Esophagus muscularis mucosa (tissue), 4 donors: ENCODE measurements at regions of chr14 and their contacts with region 1.

Region 1: GRCh38 chr14:75088574-75089373 is 19.3 kb downstream of the ZC2HC1C start:
- DNase-seq: no peak
- H3K4me3 ChIP-seq: no peak overlapping the region
- H3K27ac ChIP-seq: no peak overlapping the region
- H3K4me1 ChIP-seq: peaks cover 0 to 5% (median 2%) of the 10 kb centered on the region in 4 donors
- H3K27me3 ChIP-seq: no peaks in the 10 kb centered on the region
- CTCF ChIP-seq: peak; percentile 70 to 81 (median 77)
- EP300 ChIP-seq: no peak
- POLR2A ChIP-seq: no peak

Region 2: GRCh38 chr14:74913986-74914573 is 174.7 kb before region 1 on chr14:
- intact Hi-C with region 1: loop called (anchors 10 kb)
- DNase-seq: no peak
- H3K4me3 ChIP-seq: no peak overlapping the region
- H3K27ac ChIP-seq: peak overlapping the region; percentile 24 to 66 (median 42)
- H3K4me1 ChIP-seq: peaks cover 31 to 49% (median 39%) of the 10 kb centered on the region in 4 donors
- H3K27me3 ChIP-seq: no peaks in the 10 kb centered on the region
- CTCF ChIP-seq: peak; percentile 53 to 70 (median 60)
- EP300 ChIP-seq: no peak
- POLR2A ChIP-seq: no peak

Region 3: GRCh38 chr14:74945823-74946682 is 142.7 kb before region 1 on chr14:
- intact Hi-C with region 1: loop called (anchors 2 kb)
- DNase-seq: no peak
- H3K4me3 ChIP-seq: peak overlapping the region in 3 of 4 donors; percentile 1 to 30 (median 13)
- H3K27ac ChIP-seq: peak overlapping the region; percentile 20 to 66 (median 34)
- H3K4me1 ChIP-seq: peaks cover 34 to 38% (median 36%) of the 10 kb centered on the region in 4 donors
- H3K27me3 ChIP-seq: peaks cover 0 to 18% (median 0%) of the 10 kb centered on the region in 4 donors
- CTCF ChIP-seq: peak; percentile 91 to 99 (median 92)
- EP300 ChIP-seq: no peak
- POLR2A ChIP-seq: no peak

Region 4: DNA sequence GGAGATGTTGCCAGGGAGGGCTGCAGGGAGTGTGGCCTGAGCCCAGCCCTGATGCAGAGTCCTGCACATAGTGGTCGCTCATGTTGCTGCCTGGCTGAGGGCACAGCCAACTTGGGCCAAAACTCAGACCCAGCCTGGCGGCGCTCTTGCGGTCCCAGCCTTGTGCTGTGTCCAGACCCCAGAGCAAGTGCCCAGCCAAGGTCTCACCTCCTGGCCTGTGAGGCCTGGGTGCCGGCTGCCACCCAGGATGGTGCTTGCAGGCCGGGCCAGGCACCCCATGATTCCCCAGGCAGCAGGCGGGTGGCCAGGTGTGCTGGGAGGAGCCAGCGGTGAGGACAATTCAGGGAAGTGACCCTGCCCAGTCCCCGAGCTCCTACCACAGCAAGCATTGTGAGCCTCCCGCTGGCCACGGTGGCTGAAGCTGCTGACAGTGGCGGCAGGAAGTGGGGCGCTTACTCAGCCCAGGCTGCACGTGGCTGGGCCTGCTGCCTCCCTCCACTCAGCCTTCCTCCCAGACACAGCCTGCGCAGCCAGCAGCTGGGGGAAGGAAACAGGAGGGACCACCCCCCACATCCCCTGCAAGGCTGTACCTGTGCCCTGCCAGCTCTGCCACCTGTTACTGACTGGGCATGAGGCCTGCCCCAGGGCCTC is 115.6 kb before region 1 on chr14:
- intact Hi-C with region 1: no loop called
- DNase-seq: no peak
- H3K4me3 ChIP-seq: no peak overlapping the region
- H3K27ac ChIP-seq: peak overlapping the region; percentile 21 to 52 (median 30)
- H3K4me1 ChIP-seq: peaks cover 25 to 58% (median 52%) of the 10 kb centered on the region in 4 donors
- H3K27me3 ChIP-seq: no peaks in the 10 kb centered on the region
- CTCF ChIP-seq: no peak
- EP300 ChIP-seq: no peak
- POLR2A ChIP-seq: no peak

Region 5: DNA sequence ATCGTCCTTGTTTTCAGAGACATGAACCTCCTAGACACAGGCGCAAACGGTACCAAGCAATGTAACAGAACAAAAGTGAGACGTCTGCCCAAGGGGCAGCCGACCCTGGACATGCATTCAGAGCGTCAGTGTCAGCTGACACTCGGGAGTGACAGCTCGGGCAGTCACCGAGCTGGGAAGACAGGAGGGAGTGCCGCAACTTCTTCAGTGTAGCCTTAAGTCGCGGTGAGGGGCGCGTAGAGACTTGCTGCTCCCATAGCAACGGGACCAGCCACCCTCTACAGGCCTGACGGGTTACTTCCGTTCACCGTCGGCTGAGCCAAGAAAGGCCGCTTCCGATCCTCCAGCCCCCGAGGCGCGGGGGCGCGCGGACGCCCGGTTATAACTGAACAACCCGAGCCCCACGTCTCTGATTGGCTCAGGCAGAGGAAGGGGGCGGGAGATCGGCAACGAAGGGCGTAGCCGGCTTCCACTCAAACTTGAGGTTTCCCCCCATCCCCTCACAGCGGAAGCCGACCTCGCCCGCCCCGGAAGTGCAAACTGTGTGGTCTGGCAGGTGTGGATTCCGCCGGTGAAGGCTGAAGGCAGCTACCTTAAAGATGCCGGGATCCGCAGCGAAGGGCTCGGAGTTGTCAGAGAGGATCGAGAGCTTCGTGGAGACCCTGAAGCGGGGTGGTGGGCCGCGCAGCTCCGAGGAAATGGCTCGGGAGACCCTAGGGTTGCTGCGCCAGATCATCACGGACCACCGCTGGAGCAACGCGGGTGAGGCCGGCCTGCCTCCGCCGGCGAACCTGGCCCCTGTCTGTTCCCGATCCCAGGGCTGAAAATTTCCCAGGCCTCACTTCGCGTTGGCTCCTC is 86.2 kb before region 1 on chr14 and contains the start of gene EIF2B2:
- intact Hi-C with region 1: loop called (anchors 10 kb)
- DNase-seq: peak; percentile 100
- H3K4me3 ChIP-seq: peak within 1 kb of the TSS; percentile 77 to 92 (median 82)
- H3K27ac ChIP-seq: peak within 1 kb of the TSS; percentile 81 to 87 (median 82)
- H3K4me1 ChIP-seq: peaks cover 15 to 34% (median 25%) of the 10 kb centered on the region in 4 donors
- H3K27me3 ChIP-seq: no peaks in the 10 kb centered on the region
- CTCF ChIP-seq: peak in 2 of 3 experiments; percentile 28 to 37
- EP300 ChIP-seq: no peak
- POLR2A ChIP-seq: no peak
- total RNA-seq, gene EIF2B2: 23.3 to 58.0 (median 45.9) TPM

Region 6: DNA sequence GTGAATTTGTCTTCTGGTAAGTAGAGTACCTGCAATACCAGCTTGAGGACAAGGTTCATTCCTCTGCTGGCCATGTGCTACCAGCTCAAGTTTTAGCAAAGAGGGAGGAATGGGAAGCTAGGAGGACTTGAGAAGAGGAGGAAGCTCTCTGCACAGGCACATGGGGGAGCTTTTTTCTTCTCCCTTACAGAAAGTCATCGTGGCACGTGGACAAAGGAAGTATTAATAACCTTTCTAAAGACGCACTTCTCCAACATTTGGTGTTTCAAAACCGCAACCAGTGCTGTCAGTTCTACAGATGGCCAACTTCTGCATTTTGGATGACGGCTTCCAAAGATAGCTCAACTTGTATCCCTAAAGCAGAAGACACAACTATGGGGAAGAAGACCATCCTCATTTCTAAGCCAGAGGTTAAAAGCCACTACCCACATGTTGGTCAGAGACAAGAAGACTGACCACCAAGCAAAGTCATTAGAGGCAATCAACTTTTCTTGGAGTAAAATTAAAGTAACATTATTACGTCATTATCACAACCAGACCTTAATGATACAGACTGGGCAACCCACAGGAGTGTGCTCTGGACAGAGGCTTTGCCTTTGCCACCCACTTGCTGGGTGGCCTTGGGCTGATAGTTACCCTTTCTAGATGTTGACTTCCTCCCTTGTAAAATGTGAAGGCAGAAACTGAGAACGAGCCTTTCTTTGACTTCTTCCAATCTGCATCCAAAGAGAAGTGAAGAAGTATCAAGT is 99.9 kb after region 1 on chr14:
- intact Hi-C with region 1: no loop called
- DNase-seq: no peak
- H3K4me3 ChIP-seq: no peak overlapping the region
- H3K27ac ChIP-seq: peak overlapping the region in 1 of 4 donors; percentile 33
- H3K4me1 ChIP-seq: peaks cover 0 to 4% (median 2%) of the 10 kb centered on the region in 4 donors
- H3K27me3 ChIP-seq: no peaks in the 10 kb centered on the region
- CTCF ChIP-seq: no peak
- EP300 ChIP-seq: no peak
- POLR2A ChIP-seq: no peak

Region 7: GRCh38 chr14:75307700-75308379 is 219.1 kb after region 1 on chr14:
- intact Hi-C with region 1: no loop called
- DNase-seq: no peak
- H3K4me3 ChIP-seq: no peak overlapping the region
- H3K27ac ChIP-seq: no peak overlapping the region
- H3K4me1 ChIP-seq: peaks cover 25 to 35% (median 33%) of the 10 kb centered on the region in 4 donors
- H3K27me3 ChIP-seq: no peaks in the 10 kb centered on the region
- CTCF ChIP-seq: peak; percentile 92 to 94 (median 93)
- EP300 ChIP-seq: no peak
- POLR2A ChIP-seq: no peak